Naive thymus-derived CD8-positive, alpha-beta T cell (primary cell): ENCODE measurements at regions of chr4 and their contacts with region 1.

Region 1: GRCh38 chr4:2468445-2469192 is at the start of gene RNF4:
- DNase-seq: peak; percentile 85 to 97 (median 94)
- ATAC-seq: peak; percentile 83 to 85
- H3K4me3 Mint-ChIP-seq: peak within 1 kb of the TSS; percentile 92 to 98 (median 96)
- H3K27ac Mint-ChIP-seq: peak within 1 kb of the TSS; percentile 93 to 99 (median 98)
- H3K4me1 Mint-ChIP-seq: peaks cover 23 to 59% (median 49%) of the 10 kb centered on the region in 4 donors
- H3K27me3 Mint-ChIP-seq: no peaks in the 10 kb centered on the region
- polyA plus RNA-seq, gene RNF4: 59.8 to 88.3 (median 73.3) TPM

Region 2: DNA sequence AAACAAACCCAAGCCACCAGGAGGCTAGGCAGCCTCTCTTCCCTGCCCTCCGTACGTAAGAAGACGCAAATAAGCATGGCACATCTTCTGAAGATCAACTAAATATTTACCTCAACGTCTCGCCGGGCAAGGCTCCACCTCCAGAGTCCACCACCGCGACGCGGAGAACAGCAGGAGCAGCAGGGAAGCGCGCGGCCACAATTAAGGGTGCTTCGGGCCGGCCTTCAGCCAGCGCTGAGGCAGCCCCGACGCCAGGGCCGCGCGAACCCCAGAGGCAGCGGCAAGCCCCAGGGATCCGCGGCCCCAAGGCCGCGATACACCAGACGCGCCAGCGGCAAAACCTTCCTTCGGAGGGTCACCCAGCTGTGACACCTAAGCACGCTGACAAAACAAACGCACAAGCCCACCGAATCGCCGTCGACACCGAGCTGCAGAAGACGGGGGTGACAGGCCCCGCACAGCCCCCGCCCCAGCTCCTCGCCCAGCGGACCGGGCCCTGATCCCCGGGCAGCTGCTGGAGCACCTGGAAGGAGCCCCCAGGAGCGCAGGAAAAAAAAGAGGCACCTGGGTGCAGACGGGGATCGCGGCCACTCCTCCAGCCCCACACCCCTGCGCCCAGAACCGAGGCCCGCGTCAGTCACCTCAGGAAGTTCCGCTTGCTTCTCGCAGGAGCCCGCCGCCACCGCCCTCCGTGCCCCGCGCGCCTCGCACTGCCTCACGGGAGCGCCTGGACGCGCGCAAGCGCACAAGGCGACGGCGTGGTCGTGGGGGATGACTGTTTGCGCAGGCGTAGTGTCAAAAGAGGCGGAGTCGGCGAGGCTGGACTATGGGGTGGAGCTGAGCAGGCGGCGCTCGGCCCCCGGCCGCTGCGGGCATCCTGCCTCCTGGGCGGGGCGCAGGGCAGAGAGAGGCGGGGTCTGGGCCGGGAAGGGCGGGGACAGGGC is 226.9 kb before region 1 on chr4 and contains the starts of genes HAUS3 and POLN:
- POLR2A ChIA-PET with region 1: interaction called, 15 read pairs
- DNase-seq: peak; percentile 96 to 100 (median 99)
- ATAC-seq: peak; percentile 86 to 87
- H3K4me3 Mint-ChIP-seq: peak within 1 kb of the TSS; percentile 85 to 96 (median 90)
- H3K27ac Mint-ChIP-seq: peak within 1 kb of the TSS; percentile 83 to 97 (median 94)
- H3K4me1 Mint-ChIP-seq: peaks cover 36 to 73% (median 63%) of the 10 kb centered on the region in 4 donors
- H3K27me3 Mint-ChIP-seq: no peaks in the 10 kb centered on the region
- polyA plus RNA-seq, gene HAUS3: 16.3 to 22.2 (median 18.8) TPM
- polyA plus RNA-seq, gene POLN: 0.44 to 0.55 TPM in 2 of 3 donors, not detected in the other

Region 3: GRCh38 chr4:2412885-2413716 is 55.5 kb before region 1 on chr4:
- POLR2A ChIA-PET with region 1: interaction called, 12 read pairs
- DNase-seq: peak; percentile 55 to 94 (median 88)
- ATAC-seq: peak; percentile 74 to 79
- H3K4me3 Mint-ChIP-seq: peak overlapping the region; percentile 69 to 88 (median 82)
- H3K27ac Mint-ChIP-seq: peak overlapping the region; percentile 91 to 99 (median 96)
- H3K4me1 Mint-ChIP-seq: peaks cover 33 to 72% (median 68%) of the 10 kb centered on the region in 4 donors
- H3K27me3 Mint-ChIP-seq: peaks cover 0 to 14% (median 5%) of the 10 kb centered on the region in 5 donors

Region 4: GRCh38 chr4:2484993-2485392 is 16.4 kb after region 1 on chr4:
- POLR2A ChIA-PET with region 1: interaction called, 46 read pairs
- DNase-seq: peak; percentile 46 to 83 (median 63)
- ATAC-seq: peak; percentile 95
- H3K4me3 Mint-ChIP-seq: peak overlapping the region; percentile 68 to 92 (median 85)
- H3K27ac Mint-ChIP-seq: peak overlapping the region; percentile 84 to 93 (median 88)
- H3K4me1 Mint-ChIP-seq: peaks cover 54 to 93% (median 88%) of the 10 kb centered on the region in 4 donors
- H3K27me3 Mint-ChIP-seq: no peaks in the 10 kb centered on the region

Region 5: GRCh38 chr4:2536193-2537010 is 67.8 kb after region 1 on chr4 and contains the start of gene FAM193A:
- POLR2A ChIA-PET with region 1: interaction called, 32 read pairs
- DNase-seq: peak; percentile 92 to 99 (median 99)
- ATAC-seq: peak; percentile 89 to 92
- H3K4me3 Mint-ChIP-seq: peak within 1 kb of the TSS; percentile 83 to 94 (median 90)
- H3K27ac Mint-ChIP-seq: peak within 1 kb of the TSS; percentile 83 to 98 (median 95)
- H3K4me1 Mint-ChIP-seq: peaks cover 4 to 38% (median 21%) of the 10 kb centered on the region in 4 donors
- H3K27me3 Mint-ChIP-seq: peaks cover 0 to 2% (median 0%) of the 10 kb centered on the region in 5 donors
- polyA plus RNA-seq, gene FAM193A: 1.5 to 4.3 (median 1.7) TPM